ENCODE measurements at regions of chr1 and their contacts with region 1.

Region 1: DNA sequence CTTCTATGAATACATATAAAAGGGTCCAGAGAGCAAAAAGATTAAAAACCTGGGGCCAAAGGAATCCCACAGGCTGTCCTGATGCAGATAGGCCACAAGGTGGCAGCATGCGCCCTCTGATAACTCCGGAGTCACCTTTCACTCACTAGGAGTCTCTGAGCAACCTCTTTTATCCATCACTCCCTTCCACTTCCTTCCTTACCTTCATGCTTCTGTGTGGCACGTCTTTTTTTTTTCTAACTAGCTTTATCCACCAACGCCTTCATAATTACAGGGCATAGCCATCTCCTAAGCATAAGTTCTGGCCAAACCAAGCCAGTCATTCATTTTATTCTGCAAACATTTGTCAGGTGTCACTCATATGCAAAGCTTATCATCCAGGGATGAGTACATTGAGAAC is 3.9 kb upstream of the PGLYRP4 start:
- DNase-seq: peak; percentile 23 to 96 (median 75)

Region 2: DNA sequence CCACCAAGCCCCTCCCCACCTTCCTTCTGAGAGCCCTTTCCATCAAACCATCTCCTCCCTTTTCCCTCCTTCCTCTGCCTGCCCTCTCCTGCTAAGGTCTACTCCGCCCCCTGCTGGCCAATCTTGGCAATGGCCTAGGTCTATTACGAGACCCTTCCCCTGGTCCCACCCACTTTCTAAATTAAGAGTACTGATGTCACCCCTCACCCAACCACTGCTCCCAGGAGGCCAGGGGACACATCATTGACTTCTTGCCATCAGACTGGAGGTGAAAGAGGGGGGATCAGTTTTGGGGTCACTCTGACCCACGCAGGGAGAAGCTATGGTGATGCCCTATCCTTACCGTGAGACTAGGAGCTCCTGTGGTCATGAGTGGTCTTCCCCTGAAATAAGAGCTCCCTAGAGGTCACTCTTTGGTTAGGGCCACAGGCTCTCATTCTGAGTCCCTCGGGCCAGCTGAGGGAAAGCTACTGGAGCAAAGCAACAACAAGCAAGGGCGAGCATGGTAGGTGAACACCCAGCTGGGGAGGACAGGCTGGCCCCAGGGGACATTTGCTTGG is 142.5 kb after region 1 on chr1:
- intact Hi-C with region 1: loop called (anchors 1 kb)
- DNase-seq: peak in 8 of 10 donors; percentile 46 to 93 (median 74)

Region 3: DNA sequence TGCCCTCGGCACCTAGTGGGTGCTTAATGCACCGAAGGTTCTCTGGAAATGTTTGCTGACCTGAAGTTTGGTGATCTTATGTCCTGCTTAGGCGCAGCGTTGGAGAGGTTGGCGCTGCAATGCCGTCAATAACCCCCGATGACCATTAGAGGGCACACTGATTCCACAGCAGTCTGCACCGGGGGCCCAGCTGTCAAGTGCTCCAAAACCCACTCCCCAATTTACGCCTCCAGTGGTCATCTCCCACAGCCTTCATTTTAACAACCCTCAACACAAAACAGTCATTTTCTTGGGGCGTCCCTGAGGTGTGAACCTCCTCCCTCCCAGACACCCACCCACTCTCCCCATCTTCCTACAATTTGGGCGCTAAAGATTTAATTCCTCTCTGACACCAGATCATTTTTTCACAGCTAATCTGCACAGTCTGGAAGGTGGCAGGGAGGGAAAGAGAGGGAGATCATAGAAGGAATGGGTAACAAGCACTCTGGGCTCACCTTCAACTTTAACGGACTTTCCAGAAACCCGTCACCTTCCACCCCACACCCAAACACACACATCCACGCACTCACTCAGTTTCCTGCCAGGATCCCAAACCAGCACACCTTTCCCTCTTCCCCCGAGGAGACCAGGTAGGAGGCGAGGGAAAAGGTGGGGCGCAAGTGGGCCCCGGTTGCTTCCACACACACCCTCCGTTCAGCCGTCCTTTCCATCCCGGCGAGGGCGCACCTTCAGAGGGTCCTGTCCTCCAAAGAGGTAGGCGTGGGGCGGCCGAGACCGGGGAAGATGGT is 325.4 kb after region 1 on chr1:
- intact Hi-C with region 1: no loop called
- DNase-seq: peak in 8 of 10 donors; percentile 37 to 89 (median 46)